Cardiac septum (tissue), 1 donor: ENCODE measurements at regions of chr1 and their contacts with region 1.

Region 1: DNA sequence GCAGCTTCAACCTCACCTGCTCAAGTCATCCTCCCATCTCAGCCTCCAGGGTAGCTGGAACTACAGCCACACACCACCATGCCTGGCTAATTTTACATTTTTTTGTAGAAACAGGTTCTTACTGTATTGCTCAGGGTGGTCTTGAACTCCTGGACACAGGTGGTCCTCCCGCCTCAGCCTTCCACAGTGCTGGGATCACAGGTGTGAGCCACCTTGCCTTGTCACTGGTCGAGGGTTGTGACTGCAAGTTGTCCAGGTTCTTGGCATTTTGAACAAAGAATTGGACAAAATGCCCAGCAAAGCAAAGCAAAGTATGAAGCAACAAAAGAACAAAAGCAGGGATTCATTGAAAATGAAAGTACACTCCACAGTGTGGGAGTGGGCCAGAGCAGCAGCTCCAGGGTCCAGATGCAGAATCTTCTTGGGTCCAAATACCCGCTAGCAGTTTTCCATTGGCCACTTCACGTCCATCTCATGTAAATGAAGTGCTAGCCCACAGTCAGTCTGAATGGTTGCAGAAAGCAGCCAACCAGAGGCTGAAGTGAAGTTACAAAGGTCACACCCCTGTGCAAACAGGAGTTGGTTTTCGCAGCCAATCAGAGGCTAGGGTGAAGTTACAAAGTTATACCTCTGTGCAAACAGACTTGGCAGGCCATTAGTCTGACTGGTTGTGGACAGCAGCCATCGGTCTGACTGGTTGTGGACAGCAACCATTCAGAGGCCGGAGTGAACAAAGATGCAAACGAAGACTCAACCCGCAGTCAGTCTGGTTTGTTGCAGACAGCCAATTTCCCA is 109.5 kb upstream of the KIF26B start:
- DNase-seq: no peak

Region 2: GRCh38 chr1:244652699-244653466 is 392.4 kb before region 1 on chr1 and contains the start of gene DESI2:
- intact Hi-C with region 1: loop called (anchors 10 kb)
- DNase-seq: peak; percentile 99
- total RNA-seq, gene DESI2: 23.0 TPM

Region 3: DNA sequence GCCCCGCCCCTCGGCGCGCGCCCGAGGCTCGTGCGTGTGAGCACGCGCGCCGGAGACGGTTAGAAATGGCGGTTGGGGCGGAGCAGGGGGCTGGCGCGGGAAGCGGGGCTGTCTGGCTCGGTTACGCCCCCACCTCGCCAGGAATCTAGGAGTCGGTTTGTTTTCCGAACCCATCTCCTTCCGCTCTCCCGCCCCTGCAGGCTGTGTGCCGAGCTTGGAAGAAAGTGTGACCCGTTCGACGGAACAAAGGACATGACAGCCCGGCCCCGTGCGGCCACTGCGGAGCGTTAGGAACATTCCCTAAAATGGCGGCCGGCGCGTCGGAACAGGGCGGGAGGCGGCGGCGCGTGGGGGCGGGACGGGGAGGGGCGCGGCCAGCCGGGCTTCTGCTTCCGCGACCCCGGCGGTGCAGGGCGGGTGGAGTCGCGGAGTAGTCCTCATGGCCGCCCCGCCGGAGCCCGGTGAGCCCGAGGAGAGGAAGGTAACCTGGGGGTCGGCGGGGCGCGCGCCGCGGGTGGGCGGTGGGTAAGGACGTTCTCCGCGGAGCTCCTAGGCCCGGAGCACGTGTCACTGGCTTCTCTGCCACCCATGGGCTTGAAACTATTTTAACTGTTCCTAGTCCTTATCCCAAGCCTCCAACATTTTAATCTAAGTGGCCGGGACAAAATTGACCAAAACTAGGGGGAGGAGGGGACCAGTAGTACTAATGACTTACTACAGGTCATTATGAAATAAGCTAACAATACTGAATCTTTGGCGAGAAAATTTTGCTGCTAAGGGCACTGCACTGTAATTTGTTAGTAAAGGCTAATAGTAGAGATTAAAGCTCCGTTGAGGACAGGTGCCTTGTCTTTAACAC is 209.8 kb before region 1 on chr1 and contains the start of gene COX20:
- intact Hi-C with region 1: loop called (anchors 2 kb)
- DNase-seq: peak; percentile 94
- total RNA-seq, gene COX20: 83.7 TPM

Region 4: DNA sequence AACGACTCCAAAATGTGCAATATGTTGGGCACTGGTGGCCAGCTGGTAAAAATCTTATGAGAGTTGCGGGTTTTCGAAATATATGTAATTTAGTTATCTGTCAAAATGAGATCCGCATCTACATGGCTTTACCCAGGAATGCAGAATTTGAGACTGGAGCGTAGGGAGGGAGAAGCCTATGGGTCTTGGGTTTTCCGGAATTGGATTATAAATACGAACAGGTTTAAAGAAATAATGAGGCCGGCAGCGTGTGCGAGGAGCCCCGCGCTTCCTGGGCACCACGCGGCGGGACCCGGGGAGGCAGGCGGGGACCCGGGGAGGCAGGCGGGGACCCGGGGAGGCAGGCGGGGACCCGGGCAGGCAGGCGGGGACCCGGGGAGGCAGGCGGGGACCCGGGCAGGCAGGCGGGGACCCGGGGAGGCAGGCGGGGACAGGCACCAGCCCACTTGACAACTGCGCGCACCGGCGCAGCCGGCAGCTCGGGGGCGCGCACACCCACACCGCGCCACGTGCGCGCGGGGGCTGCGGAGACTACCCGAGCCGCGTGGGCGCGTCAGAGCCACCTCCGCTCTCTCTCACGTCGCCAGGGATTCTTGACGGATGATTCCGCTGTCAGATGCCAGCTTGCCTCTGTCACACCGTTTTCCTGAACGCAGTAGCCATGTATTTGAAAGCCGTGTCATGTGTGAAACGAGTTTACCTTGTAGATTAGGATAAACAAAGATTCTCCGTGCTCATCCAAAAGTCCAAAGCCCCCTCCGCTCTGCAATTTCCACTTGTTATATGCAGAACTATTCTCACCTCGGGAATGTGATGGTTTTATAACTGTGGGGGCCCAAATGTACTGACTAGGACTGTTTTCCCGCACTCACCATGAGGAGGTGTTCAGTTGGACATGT is 126.6 kb before region 1 on chr1:
- intact Hi-C with region 1: loop called (anchors 5 kb)
- DNase-seq: peak; percentile 83

Region 5: GRCh38 chr1:244989813-244990212 is 55.5 kb before region 1 on chr1:
- intact Hi-C with region 1: no loop called
- DNase-seq: no peak

Region 6: DNA sequence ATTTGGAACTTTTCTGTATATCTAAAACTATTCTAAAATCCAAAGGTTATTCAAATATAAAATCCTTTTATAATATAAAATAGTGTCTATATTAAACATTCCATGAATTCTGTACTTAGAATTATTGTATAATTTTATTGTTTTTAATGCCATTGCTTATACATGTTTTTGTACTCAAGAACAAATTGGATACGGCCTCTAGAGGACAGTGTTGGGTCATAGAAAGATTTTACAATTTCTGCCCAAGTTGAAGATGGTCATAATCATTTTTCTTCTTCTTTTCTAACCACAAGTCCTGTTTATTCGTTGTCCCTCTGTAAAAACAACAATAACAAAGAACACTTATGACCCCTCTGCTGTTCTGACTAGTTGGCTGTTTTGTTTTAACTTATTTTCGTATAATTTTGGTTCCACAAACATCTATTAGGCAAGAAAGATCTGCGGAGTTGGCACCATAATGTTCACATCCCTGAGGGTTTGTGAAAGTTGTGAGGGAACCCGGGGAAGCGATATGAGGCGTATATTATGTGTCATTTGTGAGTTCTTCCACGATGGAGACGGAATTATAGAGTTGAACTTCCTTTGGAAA is 33.8 kb after region 1 on chr1:
- intact Hi-C with region 1: no loop called
- DNase-seq: no peak

Region 7: GRCh38 chr1:245129319-245130240 is 84.3 kb after region 1 on chr1:
- intact Hi-C with region 1: no loop called
- DNase-seq: no peak